ENCODE measurements at regions of chr3 and their contacts with region 1.

Region 1: GRCh38 chr3:58217209-58217811 is 6.5 kb upstream of the DNASE1L3 start:
- DNase-seq: peak; percentile 56
- CTCF ChIP-seq: peak; percentile 69

Region 2: DNA sequence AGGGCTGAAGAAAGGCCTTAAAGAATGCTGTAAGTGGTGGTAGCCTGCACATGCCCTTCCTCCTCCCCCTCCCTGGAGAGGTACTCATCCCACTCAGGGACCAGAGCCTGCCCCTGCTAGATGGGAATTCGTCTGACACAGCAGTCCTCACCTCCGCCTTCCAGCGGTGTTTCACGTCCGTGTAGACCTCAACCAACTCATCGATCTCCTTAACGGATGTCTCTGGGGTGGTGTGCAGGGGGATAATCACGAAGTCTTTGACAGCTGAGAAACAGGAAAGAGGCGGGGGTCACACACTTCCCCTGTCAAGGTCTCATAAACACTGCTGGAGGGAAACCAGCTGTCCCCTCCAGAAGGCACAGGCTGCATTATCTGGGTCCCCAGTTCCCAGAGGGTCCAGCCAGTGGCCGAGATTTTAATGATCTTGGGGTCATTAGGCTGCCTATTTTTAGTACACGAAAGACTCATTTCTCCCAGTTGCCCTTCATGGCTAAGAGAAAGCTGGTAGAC is 16.4 kb before region 1 on chr3:
- CTCF ChIA-PET with region 1: interaction called, 142 read pairs
- POLR2A ChIA-PET with region 1: interaction called, 20 read pairs
- DNase-seq: no peak
- CTCF ChIP-seq: no peak

Region 3: DNA sequence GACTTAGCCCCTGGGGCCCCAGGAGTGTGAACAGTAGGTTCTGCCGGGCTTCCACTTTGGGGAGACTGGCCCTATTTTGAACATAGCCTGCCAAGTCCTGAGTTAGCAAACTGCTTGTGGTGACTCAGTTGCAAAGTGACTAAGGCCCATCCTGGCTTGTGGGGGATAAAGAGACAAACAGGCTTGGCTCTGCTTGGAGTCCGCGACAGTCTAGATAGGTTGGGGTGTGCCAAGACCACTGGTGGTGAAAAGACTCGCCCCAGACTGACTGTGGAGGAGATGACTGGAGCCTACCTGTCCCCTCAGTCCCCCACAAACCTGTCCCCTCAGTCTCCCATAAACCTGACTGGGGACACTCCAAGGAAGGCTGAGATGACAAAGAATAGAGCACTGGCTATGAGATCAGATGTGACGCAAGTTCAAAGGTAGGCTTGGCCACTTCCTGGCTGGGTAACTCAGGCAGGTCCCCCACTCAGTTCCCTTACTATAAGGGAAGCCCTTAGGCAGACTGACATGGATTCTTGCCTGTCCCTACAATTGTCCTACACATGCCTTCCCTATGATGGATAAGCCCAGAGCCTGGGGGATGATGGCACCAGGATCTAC is 10.8 kb before region 1 on chr3:
- CTCF ChIA-PET with region 1: interaction called, 142 read pairs
- POLR2A ChIA-PET with region 1: interaction called, 9 read pairs
- DNase-seq: no peak
- CTCF ChIP-seq: no peak

Region 4: GRCh38 chr3:58237238-58237940 is 20.1 kb after region 1 on chr3 and contains the start of gene ABHD6:
- CTCF ChIA-PET with region 1: interaction called, 188 read pairs
- POLR2A ChIA-PET with region 1: interaction called, 4 read pairs
- DNase-seq: peak; percentile 90
- CTCF ChIP-seq: peak; percentile 51

Region 5: GRCh38 chr3:58299839-58300516 is 82.7 kb after region 1 on chr3:
- CTCF ChIA-PET with region 1: interaction called, 22 read pairs
- POLR2A ChIA-PET with region 1: no interaction called
- DNase-seq: peak; percentile 39
- CTCF ChIP-seq: peak; percentile 44

Measured in GM10248 (cell line).